ENCODE measurements at regions of chr9 and their contacts with region 1.

Region 1: DNA sequence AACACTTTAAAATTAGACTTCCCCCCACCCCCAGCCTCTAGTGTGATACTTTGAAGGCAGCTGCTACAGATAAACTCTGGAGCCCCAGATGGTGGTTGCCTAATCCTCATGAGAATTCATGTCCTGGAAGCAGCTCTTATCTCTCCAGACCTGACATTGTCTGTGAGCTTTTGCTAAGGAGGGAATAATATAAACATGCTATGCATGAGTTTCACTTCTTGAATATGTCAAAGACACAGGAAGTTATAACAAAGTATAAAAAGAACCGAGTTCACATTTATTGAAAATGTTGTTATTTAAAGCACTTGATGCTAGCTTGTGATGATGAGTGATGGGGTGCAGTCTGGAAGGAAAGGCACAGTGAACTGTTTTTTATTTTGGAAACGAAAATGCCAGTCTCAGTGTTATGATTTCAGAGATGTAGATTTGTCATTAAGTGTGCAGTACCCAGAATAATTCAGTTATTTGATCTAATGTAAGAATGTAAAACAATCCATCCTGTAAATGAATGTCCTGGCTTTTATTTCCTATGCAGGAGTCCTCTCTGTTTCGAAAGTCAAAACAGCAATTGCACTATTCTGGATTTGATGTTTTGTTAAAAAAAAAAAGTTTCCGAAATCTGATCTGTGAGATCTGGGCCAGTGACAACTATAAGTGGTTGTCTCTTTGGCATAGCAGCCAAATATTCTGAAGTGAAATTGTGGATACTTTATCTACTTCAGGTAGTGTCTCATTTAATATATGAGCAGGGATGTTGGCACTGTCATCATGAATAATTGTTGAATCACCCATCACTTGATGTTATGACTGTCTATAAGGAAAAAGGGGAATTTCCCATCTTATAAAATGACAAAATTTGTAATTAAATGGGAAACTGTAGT is 77.0 kb downstream of the ZCCHC7 start:
- DNase-seq: no peak
- H3K4me3 ChIP-seq: no peak overlapping the region
- H3K4me3 Mint-ChIP-seq: no peak overlapping the region
- H3K27ac Mint-ChIP-seq: no peak overlapping the region
- H3K4me1 ChIP-seq: no peaks in the 10 kb centered on the region
- H3K4me1 Mint-ChIP-seq: peaks cover 14% of the 10 kb centered on the region
- H3K27me3 ChIP-seq: no peaks in the 10 kb centered on the region
- H3K27me3 Mint-ChIP-seq: no peaks in the 10 kb centered on the region
- CTCF ChIP-seq: no peak

Region 2: DNA sequence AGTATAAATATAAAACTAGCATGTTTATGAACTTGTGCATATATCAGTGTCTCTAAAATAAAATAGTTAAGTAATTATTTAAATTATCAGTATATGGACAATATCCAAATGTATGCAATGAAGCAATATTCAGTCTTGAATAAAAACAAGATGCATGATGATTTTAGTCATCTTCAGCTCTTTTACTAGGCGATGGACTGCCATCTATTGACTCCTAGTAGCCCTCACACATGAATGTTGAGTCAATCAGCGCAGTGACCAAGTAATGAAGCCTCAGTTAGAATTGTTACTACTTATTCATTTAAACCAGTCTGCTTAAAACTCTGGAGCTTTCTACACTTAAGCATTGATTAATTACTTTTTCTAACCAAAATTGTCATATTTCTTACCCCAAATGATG is 132.2 kb after region 1 on chr9:
- CTCF ChIA-PET with region 1: no interaction called
- POLR2A ChIA-PET with region 1: no interaction called
- intact Hi-C with region 1: loop called (anchors 10 kb)
- DNase-seq: peak in 1 of 2 experiments; percentile 20
- H3K4me3 ChIP-seq: no peak overlapping the region
- H3K4me3 Mint-ChIP-seq: no peak overlapping the region
- H3K27ac Mint-ChIP-seq: no peak overlapping the region
- H3K4me1 ChIP-seq: peaks cover 28% of the 10 kb centered on the region
- H3K4me1 Mint-ChIP-seq: peaks cover 10% of the 10 kb centered on the region
- H3K27me3 ChIP-seq: no peaks in the 10 kb centered on the region
- H3K27me3 Mint-ChIP-seq: no peaks in the 10 kb centered on the region
- CTCF ChIP-seq: peak; percentile 19